ENCODE measurements at regions of chr14 and their contacts with region 1.

Region 1: DNA sequence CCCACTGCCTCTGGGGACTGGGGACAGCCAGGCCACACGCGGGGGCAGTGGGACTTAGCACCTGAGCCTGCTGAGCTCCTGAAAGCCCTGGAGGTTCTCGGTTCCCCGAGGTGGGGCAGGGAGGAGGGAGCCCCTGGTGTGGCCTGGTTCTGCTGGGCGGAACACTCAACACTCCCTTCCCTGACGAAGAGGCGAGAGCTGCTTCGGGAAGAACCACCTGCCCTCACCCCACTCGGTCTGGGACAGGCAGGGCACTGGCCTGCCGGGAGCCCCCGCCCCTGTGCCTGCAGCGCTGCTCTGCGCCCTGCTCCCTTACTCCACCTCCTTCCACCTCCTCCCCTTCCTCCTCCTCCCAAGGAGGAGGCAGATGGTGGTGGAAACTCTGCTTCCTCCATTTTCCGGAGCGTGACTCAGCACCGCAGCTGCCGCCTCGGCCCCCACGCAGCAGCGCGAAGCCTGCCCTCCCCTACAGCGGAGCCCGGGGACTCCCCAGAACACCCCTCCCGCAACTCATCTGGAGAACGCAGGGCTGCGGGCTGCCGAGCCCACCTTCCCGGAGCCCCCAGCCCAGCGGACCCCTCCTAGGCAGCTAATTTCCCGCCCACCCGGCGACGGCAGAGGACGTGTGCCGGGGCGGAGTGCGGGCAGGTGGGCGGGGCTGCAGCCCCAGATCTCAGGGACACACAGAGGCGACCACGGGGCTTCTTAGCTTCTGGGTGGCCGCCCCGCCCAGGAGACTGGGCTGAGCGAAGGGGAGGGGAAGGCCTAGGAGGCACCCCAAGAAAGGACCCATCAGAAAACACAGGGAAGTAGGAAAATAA is 11.7 kb upstream of the INF2 start:
- DNase-seq: no peak
- ATAC-seq: peak; percentile 81
- H3K4me3 ChIP-seq: peak overlapping the region; percentile 65
- H3K27ac ChIP-seq: peak overlapping the region; percentile 81
- H3K4me1 ChIP-seq: peaks cover 36% of the 10 kb centered on the region
- H3K27me3 ChIP-seq: no peaks in the 10 kb centered on the region
- CTCF ChIP-seq: no peak
- EP300 ChIP-seq: no peak
- POLR2A ChIP-seq: peak; percentile 51; the same call in 1 of the 2 replicates
- RAD21 ChIP-seq: no peak

Region 2: DNA sequence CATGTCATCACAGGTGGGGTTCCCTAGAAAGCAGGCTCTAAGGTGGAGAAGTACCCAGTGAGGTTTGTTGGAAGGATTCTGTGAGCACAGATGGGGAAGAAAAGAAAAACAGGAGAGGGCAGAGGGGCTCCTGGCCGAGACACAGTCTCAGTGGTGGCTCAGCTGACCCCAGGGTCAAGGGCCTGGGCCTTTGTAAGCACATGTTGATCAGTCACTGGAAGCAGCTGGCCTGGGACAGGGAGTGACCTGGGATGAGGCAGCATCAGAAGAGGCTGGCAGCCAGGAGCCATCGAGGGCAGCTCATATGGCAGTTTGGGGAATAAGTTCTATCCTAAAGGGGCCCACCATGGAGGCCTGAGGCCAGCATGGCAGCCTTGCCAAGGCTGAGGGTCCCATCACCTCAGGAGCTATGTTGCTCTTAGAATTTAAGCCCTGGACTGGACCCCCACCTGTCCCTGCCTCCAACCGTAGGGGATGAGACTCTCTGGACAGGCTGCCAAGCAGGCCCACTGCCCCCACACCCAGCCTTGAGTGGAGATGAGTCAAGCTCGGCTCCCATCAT is 66.9 kb before region 1 on chr14:
- CTCF ChIA-PET with region 1: no interaction called
- POLR2A ChIA-PET with region 1: no interaction called
- RAD21 ChIA-PET with region 1: no interaction called
- SMC1A ChIA-PET with region 1: no interaction called
- in situ Hi-C with region 1: no loop called
- intact Hi-C with region 1: no loop called
- DNase-seq: no peak
- ATAC-seq: no peak
- H3K4me3 ChIP-seq: no peak overlapping the region
- H3K27ac ChIP-seq: no peak overlapping the region
- H3K4me1 ChIP-seq: no peaks in the 10 kb centered on the region
- H3K27me3 ChIP-seq: peaks cover 3 to 5% of the 10 kb centered on the region in 2 experiments
- CTCF ChIP-seq: no peak
- EP300 ChIP-seq: no peak
- POLR2A ChIP-seq: no peak
- RAD21 ChIP-seq: no peak

Region 3: DNA sequence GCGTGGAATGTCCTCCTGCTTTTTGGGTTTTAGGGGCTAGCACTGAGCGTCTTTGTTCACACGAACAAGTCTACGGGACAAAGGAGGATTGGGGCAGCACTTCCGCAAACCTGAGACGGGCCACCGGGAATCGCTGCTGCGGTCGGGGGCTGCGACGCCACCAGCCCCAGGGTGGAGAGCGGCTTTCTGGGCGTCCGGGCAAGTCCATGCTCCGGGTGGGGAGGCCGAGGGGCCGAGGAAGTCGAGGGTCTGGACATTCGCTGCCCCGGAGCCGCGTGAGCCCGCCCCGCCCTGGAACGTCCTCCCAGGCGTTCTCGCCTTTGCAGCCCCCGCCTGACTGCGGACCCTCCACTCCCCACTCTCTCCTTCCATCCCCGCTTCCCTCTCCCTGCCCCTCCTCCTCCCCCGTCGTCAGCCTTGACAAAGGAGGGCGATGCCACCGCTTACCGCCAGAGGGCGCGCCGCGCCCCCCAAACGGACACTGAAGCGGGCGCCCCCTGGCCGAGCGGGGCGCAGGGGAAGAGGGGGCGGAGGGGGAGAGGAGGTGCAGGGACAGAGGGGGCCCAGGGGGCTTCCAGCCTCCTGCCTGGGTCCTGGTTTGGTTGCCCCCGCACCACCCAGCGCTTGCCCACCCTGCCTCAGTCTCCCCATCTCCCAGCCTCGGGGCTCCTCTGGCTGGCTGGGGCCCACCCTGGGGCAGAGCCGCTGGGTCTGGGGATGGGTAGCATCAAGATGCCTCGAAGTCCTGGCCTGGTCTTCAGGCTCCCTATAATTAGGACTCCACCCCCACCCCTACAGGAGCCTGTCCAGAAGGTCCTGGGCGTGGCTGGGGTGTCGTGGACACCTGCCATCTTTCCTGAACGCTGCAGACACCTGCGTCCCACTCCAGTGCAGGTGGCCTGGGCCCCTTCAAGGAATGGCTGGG is 27.4 kb before region 1 on chr14:
- CTCF ChIA-PET with region 1: interaction called, 20 read pairs
- POLR2A ChIA-PET with region 1: no interaction called
- RAD21 ChIA-PET with region 1: interaction called, 7 read pairs
- SMC1A ChIA-PET with region 1: interaction called, 7 read pairs
- in situ Hi-C with region 1: no loop called
- intact Hi-C with region 1: no loop called
- DNase-seq: no peak
- ATAC-seq: peak; percentile 98
- H3K4me3 ChIP-seq: 0 out of 2 replicates have a peak overlapping the region, but pooled peaks have one; percentile 29
- H3K27ac ChIP-seq: no peak overlapping the region
- H3K4me1 ChIP-seq: no peaks in the 10 kb centered on the region
- H3K27me3 ChIP-seq: no peaks in the 10 kb centered on the region
- CTCF ChIP-seq: peak; percentile 92 to 100 (median 99)
- EP300 ChIP-seq: no peak
- POLR2A ChIP-seq: no peak
- RAD21 ChIP-seq: peak; percentile 98

Region 4: GRCh38 chr14:104657101-104657524 is 20.6 kb before region 1 on chr14:
- CTCF ChIA-PET with region 1: interaction called, 72 read pairs
- POLR2A ChIA-PET with region 1: interaction called, 49 read pairs
- RAD21 ChIA-PET with region 1: interaction called, 29 read pairs
- SMC1A ChIA-PET with region 1: interaction called, 60 read pairs
- in situ Hi-C with region 1: no loop called
- intact Hi-C with region 1: loop called (anchors 2 kb)
- DNase-seq: no peak
- ATAC-seq: peak; percentile 64
- H3K4me3 ChIP-seq: no peak overlapping the region
- H3K27ac ChIP-seq: peak overlapping the region; percentile 71
- H3K4me1 ChIP-seq: peaks cover 56% of the 10 kb centered on the region
- H3K27me3 ChIP-seq: no peaks in the 10 kb centered on the region
- CTCF ChIP-seq: no peak
- EP300 ChIP-seq: no peak
- POLR2A ChIP-seq: no peak
- RAD21 ChIP-seq: no peak

Region 5: GRCh38 chr14:104665657-104666522 is 11.8 kb before region 1 on chr14:
- CTCF ChIA-PET with region 1: interaction called, 72 read pairs
- POLR2A ChIA-PET with region 1: interaction called, 49 read pairs
- RAD21 ChIA-PET with region 1: interaction called, 6 read pairs
- SMC1A ChIA-PET with region 1: interaction called, 60 read pairs
- in situ Hi-C with region 1: no loop called
- intact Hi-C with region 1: loop called (anchors 2 kb)
- DNase-seq: no peak
- ATAC-seq: peak; percentile 71
- H3K4me3 ChIP-seq: no peak overlapping the region
- H3K27ac ChIP-seq: peak overlapping the region; percentile 48; the same call in 1 of the 2 replicates
- H3K4me1 ChIP-seq: peaks cover 17% of the 10 kb centered on the region
- H3K27me3 ChIP-seq: no peaks in the 10 kb centered on the region
- CTCF ChIP-seq: peak in 2 of 3 experiments; percentile 25 to 37; a peak in 2 of 6 replicates
- EP300 ChIP-seq: no peak
- POLR2A ChIP-seq: no peak
- RAD21 ChIP-seq: no peak

Measured in GM12878 (cell line).